ENCODE measurements at regions of chr3 and their contacts with region 1.

Region 1: DNA sequence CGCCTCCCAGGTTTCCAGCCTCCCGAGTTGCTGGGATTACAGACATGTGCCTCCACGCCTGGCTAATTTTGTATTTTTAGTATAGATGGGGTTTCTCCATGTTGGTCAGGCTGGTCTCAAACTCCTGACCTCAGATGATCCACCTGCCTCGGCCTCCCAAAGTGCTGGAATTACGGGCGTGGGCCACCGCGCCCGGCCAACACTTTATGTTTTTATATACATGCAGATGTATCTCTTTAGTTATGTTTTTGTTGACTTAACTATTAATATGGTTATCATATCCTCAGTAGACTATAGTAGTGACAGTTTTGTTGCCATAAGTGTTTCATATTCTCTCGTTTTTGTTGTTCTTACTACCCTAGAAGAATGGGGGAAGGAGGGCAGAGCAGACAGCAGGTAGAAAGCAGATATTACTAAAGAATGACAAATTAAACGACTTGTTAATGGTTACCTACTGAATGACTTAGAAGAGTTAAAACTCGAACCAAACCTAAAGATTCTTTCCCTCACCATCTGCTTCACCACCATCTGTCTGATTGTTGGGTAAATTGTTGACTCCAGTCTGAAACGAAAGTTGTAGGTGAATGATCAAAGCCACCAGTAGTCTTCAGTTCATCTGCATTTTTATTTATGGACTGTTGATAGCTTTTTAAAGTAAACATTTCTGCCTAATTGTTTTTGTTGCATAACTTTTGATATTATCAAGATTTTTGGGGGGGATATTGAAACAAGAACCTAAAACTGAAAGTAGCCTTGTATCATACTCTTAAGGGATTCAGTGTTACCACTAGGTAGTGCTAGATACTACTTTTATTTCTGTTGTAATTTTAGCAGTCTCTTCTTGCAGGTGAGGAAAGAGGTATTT is 89.3 kb downstream of the RASA2 start:
- DNase-seq: peak in 2 of 9 experiments; percentile 19 to 54
- ATAC-seq: peak; percentile 75
- H3K4me3 ChIP-seq: no peak overlapping the region
- H3K4me3 Mint-ChIP-seq: peak overlapping the region; percentile 64
- H3K27ac ChIP-seq: peak overlapping the region in 1 of 2 experiments; percentile 52
- H3K27ac Mint-ChIP-seq: peak overlapping the region; percentile 86
- H3K4me1 ChIP-seq: peaks cover 6% of the 10 kb centered on the region
- H3K4me1 Mint-ChIP-seq: peaks cover 11% of the 10 kb centered on the region
- H3K27me3 ChIP-seq: no peaks in the 10 kb centered on the region
- H3K27me3 Mint-ChIP-seq: no peaks in the 10 kb centered on the region
- CTCF ChIP-seq: peak; percentile 62

Region 2: DNA sequence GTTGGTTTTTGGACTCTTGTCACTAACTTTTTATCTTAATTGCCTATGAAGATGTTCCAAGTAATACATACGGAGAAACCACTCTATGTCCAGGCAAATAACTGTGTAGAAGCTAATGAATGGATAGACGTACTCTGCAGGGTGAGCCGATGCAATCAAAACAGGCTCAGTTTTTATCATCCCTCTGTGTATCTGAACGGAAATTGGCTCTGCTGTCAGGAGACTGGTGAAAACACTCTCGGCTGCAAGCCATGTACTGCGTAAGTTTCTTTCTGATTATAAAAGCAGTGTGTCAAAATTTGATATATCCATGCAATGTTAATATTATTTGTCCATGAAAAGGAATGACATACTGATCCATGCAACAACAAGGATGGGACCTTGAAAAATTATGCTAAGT is 32.3 kb after region 1 on chr3:
- CTCF ChIA-PET with region 1: interaction called, 3 read pairs
- POLR2A ChIA-PET with region 1: interaction called, 3 read pairs
- intact Hi-C with region 1: loop called in 1 of 2 experiments (anchors 5 kb)
- DNase-seq: no peak
- ATAC-seq: no peak
- H3K4me3 ChIP-seq: no peak overlapping the region
- H3K4me3 Mint-ChIP-seq: no peak overlapping the region
- H3K27ac ChIP-seq: no peak overlapping the region
- H3K27ac Mint-ChIP-seq: no peak overlapping the region
- H3K4me1 ChIP-seq: no peaks in the 10 kb centered on the region
- H3K4me1 Mint-ChIP-seq: peaks cover 5% of the 10 kb centered on the region
- H3K27me3 ChIP-seq: no peaks in the 10 kb centered on the region
- H3K27me3 Mint-ChIP-seq: no peaks in the 10 kb centered on the region
- CTCF ChIP-seq: no peak

Region 3: GRCh38 chr3:141746962-141747361 is 170.9 kb after region 1 on chr3:
- CTCF ChIA-PET with region 1: no interaction called
- POLR2A ChIA-PET with region 1: no interaction called
- intact Hi-C with region 1: loop called in 1 of 2 experiments (anchors 10 kb)
- DNase-seq: no peak
- ATAC-seq: no peak
- H3K4me3 ChIP-seq: no peak overlapping the region
- H3K4me3 Mint-ChIP-seq: no peak overlapping the region
- H3K27ac ChIP-seq: no peak overlapping the region
- H3K27ac Mint-ChIP-seq: no peak overlapping the region
- H3K4me1 ChIP-seq: peaks cover 11% of the 10 kb centered on the region
- H3K4me1 Mint-ChIP-seq: peaks cover 29% of the 10 kb centered on the region
- H3K27me3 ChIP-seq: no peaks in the 10 kb centered on the region
- H3K27me3 Mint-ChIP-seq: no peaks in the 10 kb centered on the region
- CTCF ChIP-seq: no peak

Region 4: DNA sequence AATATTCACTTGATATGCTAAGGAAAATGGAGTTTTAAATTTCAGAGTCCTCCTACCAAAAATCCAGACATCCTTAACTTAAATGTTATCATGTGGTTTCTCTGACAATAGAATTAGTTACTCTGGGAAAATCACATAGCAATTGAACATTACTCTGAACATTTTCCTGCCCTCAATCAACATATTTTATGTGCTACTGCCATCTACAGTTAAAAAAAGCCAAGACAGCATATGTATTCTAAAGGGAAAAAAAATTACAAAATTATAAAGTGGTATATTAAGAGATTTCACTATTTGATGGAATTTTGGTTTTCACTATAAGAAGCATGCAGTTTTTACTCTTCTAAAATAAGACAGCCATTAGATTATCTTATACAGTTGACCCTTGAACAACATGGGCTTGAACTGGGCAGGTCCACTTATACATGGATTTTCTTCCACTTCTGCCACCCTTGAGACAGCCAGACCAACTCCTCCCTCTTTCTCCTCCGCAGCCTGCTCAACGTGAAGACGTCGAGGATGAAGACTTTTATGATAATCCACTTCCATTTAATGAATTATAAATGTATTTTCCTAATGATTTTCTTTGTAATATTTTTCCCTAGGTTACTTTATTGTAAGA is 422.7 kb after region 1 on chr3:
- CTCF ChIA-PET with region 1: no interaction called
- POLR2A ChIA-PET with region 1: no interaction called
- intact Hi-C with region 1: loop called in 1 of 2 experiments (anchors 2 kb)
- DNase-seq: peak in 2 of 9 experiments; percentile 8 to 30
- ATAC-seq: no peak
- H3K4me3 ChIP-seq: no peak overlapping the region
- H3K4me3 Mint-ChIP-seq: no peak overlapping the region
- H3K27ac ChIP-seq: no peak overlapping the region
- H3K27ac Mint-ChIP-seq: no peak overlapping the region
- H3K4me1 ChIP-seq: no peaks in the 10 kb centered on the region
- H3K4me1 Mint-ChIP-seq: no peaks in the 10 kb centered on the region
- H3K27me3 ChIP-seq: no peaks in the 10 kb centered on the region
- H3K27me3 Mint-ChIP-seq: no peaks in the 10 kb centered on the region
- CTCF ChIP-seq: peak; percentile 35